ENCODE measurements at regions of chr4 and their contacts with region 1.

Region 1: DNA sequence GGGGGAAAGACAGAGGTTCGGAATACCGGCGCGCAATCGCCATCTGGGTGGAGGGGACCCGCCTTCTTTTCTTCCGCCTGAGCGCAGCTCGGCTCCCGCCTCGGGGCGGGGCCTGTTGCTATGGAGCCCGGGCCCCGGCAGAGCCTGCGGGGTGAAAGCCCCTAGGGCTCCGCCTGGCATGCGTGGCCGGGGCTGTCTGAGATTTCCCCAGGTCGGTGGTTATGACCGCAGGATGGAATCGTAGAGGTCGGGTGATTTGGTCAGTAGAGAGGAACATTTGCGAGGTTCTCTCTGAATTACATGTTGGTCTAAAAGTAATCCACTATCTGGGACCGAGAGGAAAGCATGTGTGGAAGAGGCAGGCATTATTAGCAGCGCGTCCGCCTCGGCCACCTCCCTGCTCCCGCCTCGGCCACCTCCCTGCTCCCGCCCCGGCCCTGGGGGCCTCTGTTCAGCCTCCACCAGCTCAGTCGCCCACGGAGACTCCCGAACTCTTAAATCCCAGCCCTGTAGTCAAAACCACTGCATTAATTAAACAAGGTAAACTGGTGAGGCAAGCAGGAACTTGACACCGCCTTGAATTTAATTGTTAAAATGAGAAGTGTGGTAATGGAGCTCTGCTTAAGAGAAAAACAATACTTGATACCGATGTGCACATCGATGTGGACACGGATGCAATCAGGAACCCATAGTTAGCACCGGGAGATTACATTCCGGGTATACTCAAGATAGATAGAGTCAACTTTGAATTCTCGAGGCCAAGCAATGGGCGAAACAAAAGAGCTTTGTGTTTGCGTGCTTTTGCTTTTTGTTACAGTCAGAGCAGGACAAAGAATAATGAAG is 45.2 kb downstream of the TRIM2 start:
- DNase-seq: peak; percentile 67 to 92 (median 82)
- ATAC-seq: peak; percentile 97 to 99 (median 98)
- H3K4me3 ChIP-seq: peak overlapping the region; percentile 50 to 60
- H3K4me3 Mint-ChIP-seq: peak overlapping the region; percentile 83 to 90 (median 87)
- H3K27ac ChIP-seq: peak overlapping the region; percentile 81
- H3K27ac Mint-ChIP-seq: peak overlapping the region; percentile 89 to 92
- H3K4me1 ChIP-seq: peaks cover 8 to 21% of the 10 kb centered on the region in 2 experiments
- H3K4me1 Mint-ChIP-seq: peaks cover 18 to 36% (median 26%) of the 10 kb centered on the region in 3 donors
- H3K27me3 ChIP-seq: no peaks in the 10 kb centered on the region
- H3K27me3 Mint-ChIP-seq: no peaks in the 10 kb centered on the region

Region 2: DNA sequence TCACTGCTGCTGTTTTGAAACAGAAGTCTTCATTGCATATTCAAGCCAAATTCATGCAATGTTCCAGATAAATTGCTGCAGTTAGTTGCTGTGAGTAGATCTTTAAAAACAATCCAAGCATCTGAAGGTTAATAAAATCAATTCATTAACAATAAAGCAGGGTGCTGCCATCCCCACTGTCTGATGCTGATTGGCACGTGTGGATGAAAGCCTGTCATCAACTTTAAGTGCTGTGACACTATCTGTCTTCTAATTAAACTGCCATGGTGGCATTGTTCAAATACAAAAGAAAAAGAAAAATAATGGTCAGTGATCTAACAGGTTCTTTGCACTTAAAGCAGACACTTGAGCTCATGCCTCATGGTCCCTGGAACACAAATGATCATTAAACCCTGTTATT is 32.1 kb after region 1 on chr4:
- CTCF ChIA-PET with region 1: no interaction called
- POLR2A ChIA-PET with region 1: interaction called in 1 of 2 experiments, 12 read pairs
- DNase-seq: no peak
- ATAC-seq: no peak
- H3K4me3 ChIP-seq: no peak overlapping the region
- H3K4me3 Mint-ChIP-seq: no peak overlapping the region
- H3K27ac ChIP-seq: no peak overlapping the region
- H3K27ac Mint-ChIP-seq: no peak overlapping the region
- H3K4me1 ChIP-seq: no peaks in the 10 kb centered on the region
- H3K4me1 Mint-ChIP-seq: peaks cover 4 to 6% (median 5%) of the 10 kb centered on the region in 3 donors
- H3K27me3 ChIP-seq: no peaks in the 10 kb centered on the region
- H3K27me3 Mint-ChIP-seq: no peaks in the 10 kb centered on the region